ENCODE measurements at regions of chr4 and their contacts with region 1.

Region 1: GRCh38 chr4:168656055-168656660 is 159.3 kb downstream of the PALLD start:
- DNase-seq: no peak
- ATAC-seq: peak; percentile 90 to 91
- H3K4me3 ChIP-seq: no peak overlapping the region
- H3K27ac ChIP-seq: peak overlapping the region; percentile 29 to 67 (median 63)
- H3K4me1 ChIP-seq: peaks cover 39 to 46% of the 10 kb centered on the region in 2 donors
- H3K27me3 ChIP-seq: no peaks in the 10 kb centered on the region
- CTCF ChIP-seq: no peak
- POLR2A ChIP-seq: no peak

Region 2: GRCh38 chr4:168569066-168569970 is 86.8 kb before region 1 on chr4:
- in situ Hi-C with region 1: no loop called
- intact Hi-C with region 1: no loop called
- DNase-seq: peak; percentile 15 to 51
- ATAC-seq: peak; percentile 77 to 85
- H3K4me3 ChIP-seq: peak overlapping the region; percentile 26 to 49 (median 32)
- H3K27ac ChIP-seq: peak overlapping the region; percentile 16 to 74 (median 52)
- H3K4me1 ChIP-seq: peaks cover 33 to 36% of the 10 kb centered on the region in 2 donors
- H3K27me3 ChIP-seq: no peaks in the 10 kb centered on the region
- CTCF ChIP-seq: no peak
- POLR2A ChIP-seq: no peak

Region 3: DNA sequence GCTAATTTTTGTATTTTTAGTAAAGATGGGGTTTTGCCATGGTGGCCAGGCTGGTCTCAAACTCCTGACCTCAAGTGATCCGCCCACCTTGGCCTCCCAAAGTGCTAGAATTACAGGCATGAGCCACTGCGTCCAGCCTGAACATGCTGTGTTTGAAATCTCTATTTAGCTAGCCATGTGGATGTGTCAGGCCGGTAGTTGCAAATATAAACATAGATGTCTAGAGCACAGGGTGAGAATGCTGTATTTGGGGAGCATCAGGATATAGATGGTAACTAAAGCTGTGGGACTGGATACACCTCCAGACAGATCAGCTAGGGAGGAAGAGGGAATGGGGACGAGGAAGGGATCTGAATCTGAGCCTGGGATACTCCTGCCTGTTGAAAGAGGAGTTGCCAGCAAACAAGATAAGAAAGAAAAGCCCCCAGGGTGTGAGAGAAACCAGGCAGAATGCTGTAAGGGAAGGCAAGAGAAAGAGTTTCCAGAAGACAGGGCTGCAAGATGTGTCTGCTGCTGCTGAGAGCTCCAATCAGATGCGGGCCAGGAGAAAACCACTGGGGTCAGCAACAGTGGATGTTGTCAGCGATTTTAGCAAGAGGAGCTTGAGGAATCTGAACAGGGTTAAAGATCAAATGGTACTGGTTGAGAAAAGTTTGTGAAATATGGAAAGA is 18.1 kb after region 1 on chr4:
- in situ Hi-C with region 1: no loop called
- intact Hi-C with region 1: loop called (anchors 2 kb)
- DNase-seq: no peak
- ATAC-seq: no peak
- H3K4me3 ChIP-seq: no peak overlapping the region
- H3K27ac ChIP-seq: peak overlapping the region; percentile 54 to 84 (median 78)
- H3K4me1 ChIP-seq: no peaks in the 10 kb centered on the region
- H3K27me3 ChIP-seq: no peaks in the 10 kb centered on the region
- CTCF ChIP-seq: no peak
- POLR2A ChIP-seq: no peak

Region 4: GRCh38 chr4:168710353-168710946 is 54.3 kb after region 1 on chr4:
- in situ Hi-C with region 1: no loop called
- intact Hi-C with region 1: no loop called
- DNase-seq: peak; percentile 17 to 43
- ATAC-seq: peak; percentile 66 to 74
- H3K4me3 ChIP-seq: no peak overlapping the region
- H3K27ac ChIP-seq: peak overlapping the region; percentile 29 to 72 (median 58)
- H3K4me1 ChIP-seq: peaks cover 24 to 26% of the 10 kb centered on the region in 2 donors
- H3K27me3 ChIP-seq: no peaks in the 10 kb centered on the region
- CTCF ChIP-seq: peak; percentile 48 to 75 (median 66)
- POLR2A ChIP-seq: no peak